Activated CD8-positive, alpha-beta T cell treated with anti-CD3 and anti-CD28 coated beads, Interleukin-2, amount 10 ng/mL, durations not matched to agents 7 days and 5 days (primary cell): ENCODE measurements at regions of chr19 and their contacts with region 1.

Region 1: DNA sequence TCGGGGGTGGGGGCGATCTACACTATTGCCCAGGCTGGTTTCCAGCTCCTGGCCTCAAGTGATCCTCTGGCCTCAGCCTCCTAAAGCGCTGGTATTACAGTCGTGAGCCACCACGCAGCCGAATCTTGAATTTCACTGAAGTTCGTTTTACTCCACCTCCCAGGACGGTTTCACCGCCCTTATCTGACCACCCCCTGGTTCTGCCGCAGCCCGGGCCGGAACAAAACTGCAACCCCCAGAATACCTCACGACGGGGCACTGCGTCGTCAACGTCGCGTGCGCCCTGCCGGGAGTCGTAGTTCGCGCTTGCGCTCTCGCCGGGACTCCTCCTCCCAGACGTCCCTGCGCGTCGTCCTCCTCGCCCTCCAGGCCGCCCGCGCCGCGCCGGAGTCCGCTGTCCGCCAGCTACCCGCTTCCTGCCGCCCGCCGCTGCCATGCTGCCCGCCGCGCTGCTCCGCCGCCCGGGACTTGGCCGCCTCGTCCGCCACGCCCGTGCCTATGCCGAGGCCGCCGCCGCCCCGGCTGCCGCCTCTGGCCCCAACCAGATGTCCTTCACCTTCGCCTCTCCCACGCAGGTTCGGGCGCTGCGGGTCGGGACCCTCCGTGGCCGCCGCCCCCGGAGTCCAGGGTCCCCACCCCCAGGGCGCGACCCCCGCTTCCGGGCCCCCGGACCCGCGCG is at the start of gene ATP5F1D:
- DNase-seq: peak; percentile 96
- ATAC-seq: peak; percentile 73
- H3K4me3 Mint-ChIP-seq: peak within 1 kb of the TSS; percentile 88
- H3K27ac Mint-ChIP-seq: peak within 1 kb of the TSS; percentile 94
- H3K4me1 Mint-ChIP-seq: peaks cover 37% of the 10 kb centered on the region
- H3K27me3 Mint-ChIP-seq: peaks cover 14% of the 10 kb centered on the region
- total RNA-seq, gene ATP5F1D: 209 to 222 TPM

Region 2: DNA sequence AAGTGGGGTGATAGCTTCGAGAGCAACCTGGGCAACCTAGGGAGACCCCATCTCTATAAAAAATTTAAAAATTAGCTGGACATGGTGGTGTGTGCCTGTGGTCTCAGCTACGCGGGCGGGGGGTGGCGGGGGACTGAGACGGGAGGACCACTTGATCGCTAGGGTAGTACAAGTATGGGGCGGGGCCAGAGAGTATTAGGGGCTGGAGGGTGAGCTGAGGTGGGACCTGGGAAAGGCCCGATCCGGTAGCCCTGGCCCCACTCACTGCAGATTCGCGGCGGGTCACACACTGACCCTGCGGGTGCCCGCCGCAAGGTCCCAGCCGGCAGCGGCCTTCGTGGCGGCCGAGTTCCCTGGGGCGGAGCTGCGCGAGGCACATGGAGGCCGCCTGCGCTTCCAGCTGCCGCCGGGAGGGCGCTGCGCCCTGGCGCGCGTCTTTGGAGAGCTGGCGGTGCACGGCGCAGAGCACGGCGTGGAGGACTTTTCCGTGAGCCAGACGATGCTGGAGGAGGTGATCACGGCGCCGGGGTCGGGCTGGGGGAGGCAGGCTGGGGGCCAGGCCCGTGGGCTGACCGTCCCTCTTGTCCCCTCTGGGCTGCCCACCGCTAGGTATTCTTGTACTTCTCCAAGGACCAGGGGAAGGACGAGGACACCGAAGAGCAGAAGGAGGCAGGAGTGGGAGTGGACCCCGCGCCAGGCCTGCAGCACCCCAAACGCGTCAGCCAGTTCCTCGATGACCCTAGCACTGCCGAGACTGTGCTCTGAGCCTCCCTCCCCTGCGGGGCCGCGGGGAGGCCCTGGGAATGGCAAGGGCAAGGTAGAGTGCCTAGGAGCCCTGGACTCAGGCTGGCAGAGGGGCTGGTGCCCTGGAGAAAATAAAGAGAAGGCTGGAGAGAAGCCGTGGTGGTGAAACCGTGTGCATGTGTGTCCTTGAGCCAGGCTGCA is 176.6 kb before region 1 on chr19:
- CTCF ChIA-PET with region 1: interaction called, 10 read pairs
- POLR2A ChIA-PET with region 1: no interaction called
- DNase-seq: peak; percentile 77
- ATAC-seq: peak; percentile 38
- H3K4me3 Mint-ChIP-seq: peak overlapping the region; percentile 19
- H3K27ac Mint-ChIP-seq: peak overlapping the region; percentile 74
- H3K4me1 Mint-ChIP-seq: peaks cover 48% of the 10 kb centered on the region
- H3K27me3 Mint-ChIP-seq: no peaks in the 10 kb centered on the region

Region 3: GRCh38 chr19:1252821-1253513 is 11.4 kb after region 1 on chr19:
- CTCF ChIA-PET with region 1: interaction called, 45 read pairs
- POLR2A ChIA-PET with region 1: interaction called, 10 read pairs
- DNase-seq: peak; percentile 85
- ATAC-seq: peak; percentile 16
- H3K4me3 Mint-ChIP-seq: peak overlapping the region; percentile 91
- H3K27ac Mint-ChIP-seq: peak overlapping the region; percentile 81
- H3K4me1 Mint-ChIP-seq: peaks cover 30% of the 10 kb centered on the region
- H3K27me3 Mint-ChIP-seq: no peaks in the 10 kb centered on the region

Region 4: DNA sequence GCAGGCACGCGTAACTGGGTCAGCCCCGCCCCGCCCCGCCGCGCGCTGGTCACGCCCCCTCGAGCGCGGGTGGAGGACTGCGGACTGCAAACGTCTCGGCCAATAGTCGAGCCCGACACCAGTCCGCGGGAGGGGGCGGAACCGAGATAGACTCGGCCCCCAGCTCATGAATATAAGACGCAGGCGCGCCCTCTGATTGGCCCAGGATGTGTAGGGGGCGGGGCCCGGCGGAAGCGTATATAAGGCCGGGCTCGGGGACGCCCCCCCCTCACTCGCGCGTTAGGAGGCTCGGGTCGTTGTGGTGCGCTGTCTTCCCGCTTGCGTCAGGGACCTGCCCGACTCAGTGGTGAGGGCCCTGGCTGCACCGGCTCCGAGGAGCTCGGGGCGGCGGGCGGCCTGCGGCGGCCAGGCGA is 27.5 kb after region 1 on chr19 and contains the start of gene CIRBP:
- CTCF ChIA-PET with region 1: interaction called, 606 read pairs
- POLR2A ChIA-PET with region 1: interaction called, 218 read pairs
- DNase-seq: peak; percentile 100
- ATAC-seq: peak; percentile 76
- H3K4me3 Mint-ChIP-seq: peak within 1 kb of the TSS; percentile 83
- H3K27ac Mint-ChIP-seq: peak within 1 kb of the TSS; percentile 90
- H3K4me1 Mint-ChIP-seq: peaks cover 75% of the 10 kb centered on the region
- H3K27me3 Mint-ChIP-seq: peaks cover 2% of the 10 kb centered on the region
- total RNA-seq, gene CIRBP: 172 to 195 TPM

Region 5: DNA sequence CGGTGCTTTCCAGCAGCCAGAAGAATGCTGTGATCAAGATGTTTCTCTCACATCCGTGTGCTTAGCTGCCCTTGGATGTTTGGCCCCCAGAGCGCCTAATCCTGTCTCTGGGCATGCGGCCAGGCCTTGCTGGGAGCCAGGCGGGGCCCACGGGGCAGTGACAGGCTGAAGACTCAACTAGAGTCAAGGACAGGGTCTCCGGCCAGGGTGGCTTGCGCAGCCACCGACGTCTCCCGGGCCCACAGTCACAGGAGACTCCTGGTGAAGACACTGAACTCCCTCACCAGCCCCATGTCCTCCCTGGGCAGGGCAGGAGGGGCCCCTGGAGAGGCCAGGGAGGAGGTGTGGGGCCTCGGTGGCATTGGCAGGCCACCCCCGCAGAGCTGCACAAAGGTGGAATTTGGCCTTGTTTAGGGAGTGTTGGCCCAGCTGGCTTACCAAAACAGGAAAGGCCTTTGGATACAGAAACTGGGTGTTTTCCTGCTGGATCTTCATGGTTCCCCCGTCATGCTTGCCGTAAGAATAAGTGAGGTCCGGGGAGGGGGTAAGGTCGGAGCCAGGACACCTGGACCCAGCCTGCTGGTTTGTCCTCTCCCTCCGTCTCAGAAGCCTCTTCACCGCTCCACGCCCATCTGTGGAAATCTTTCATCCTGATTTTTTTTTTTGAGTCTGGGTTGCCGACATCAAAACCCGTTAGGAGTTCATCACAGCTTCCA is 132.1 kb after region 1 on chr19:
- CTCF ChIA-PET with region 1: interaction called, 16 read pairs
- POLR2A ChIA-PET with region 1: no interaction called
- DNase-seq: no peak
- ATAC-seq: no peak
- H3K4me3 Mint-ChIP-seq: no peak overlapping the region
- H3K27ac Mint-ChIP-seq: no peak overlapping the region
- H3K4me1 Mint-ChIP-seq: no peaks in the 10 kb centered on the region
- H3K27me3 Mint-ChIP-seq: no peaks in the 10 kb centered on the region